ENCODE measurements at regions of chr19 and their contacts with region 1.

Region 1: DNA sequence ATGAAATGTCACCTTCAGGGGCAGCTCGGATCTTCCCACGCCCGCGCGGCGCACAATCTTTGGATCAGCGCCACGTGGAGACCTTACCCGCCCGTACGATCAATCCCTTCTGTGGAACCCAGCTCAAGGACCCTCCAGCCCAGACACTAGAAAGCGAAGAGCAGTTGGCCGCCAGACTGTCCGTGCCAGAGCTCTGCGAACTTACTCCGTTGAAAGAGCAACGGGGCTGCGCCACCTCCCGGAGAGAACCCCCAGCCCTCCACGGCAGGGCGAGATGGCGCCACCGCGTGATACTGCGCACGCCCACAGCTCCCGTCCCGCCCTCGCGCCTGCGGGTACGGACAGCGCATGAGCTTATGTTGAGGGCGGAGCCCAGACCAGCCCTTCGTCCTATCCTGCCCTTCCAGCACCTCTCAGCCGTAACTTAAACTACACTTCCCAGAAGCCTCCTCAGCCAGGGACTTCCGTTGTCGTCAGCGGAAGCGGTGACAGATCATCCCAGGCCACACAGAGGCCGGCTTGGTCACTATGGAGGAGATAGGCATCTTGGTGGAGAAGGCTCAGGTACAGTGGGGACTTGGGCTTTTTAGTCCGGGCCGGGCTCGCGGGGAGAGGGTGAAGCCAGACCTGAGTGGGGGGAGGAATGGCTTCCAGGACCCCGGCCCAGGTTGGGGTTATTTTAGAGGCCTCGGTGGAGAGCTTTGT is at the start of gene PSMC4:
- DNase-seq: peak; percentile 100
- ATAC-seq: peak; percentile 98
- H3K4me3 ChIP-seq: peak within 1 kb of the TSS; percentile 35 to 50
- H3K27ac ChIP-seq: peak within 1 kb of the TSS; percentile 82
- H3K4me1 ChIP-seq: peaks cover 17% of the 10 kb centered on the region
- H3K27me3 ChIP-seq: no peaks in the 10 kb centered on the region
- CTCF ChIP-seq: no peak
- total RNA-seq, gene PSMC4: 2,386 TPM

Region 2: DNA sequence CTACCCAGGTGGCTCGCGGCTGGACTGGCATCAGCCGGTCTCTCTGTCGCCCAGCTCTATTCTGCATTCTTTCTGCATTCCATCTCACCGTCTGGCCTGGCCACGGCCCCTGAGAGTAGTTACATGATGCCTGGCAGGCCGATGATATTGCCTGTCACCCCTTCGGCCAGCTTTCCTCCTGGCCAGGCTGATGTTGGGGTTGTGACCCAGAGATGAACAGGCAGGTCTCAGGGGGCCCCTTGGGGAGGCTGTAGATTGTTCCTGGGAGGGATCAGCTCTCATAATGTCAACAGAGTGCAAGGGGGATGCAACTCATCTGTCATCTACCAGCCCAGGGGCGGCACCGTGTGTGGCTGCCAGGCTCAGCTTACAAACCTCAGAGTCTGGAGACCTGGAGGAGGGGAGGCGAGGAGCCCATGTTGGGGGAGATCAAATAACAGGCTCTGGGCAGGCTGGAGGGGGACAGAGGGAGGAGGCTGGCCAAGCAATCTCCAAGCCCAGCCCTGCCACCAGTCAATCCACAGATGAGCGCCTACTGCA is 981.7 kb before region 1 on chr19:
- CTCF ChIA-PET with region 1: no interaction called
- POLR2A ChIA-PET with region 1: interaction called, 15 read pairs
- in situ Hi-C with region 1: no loop called
- intact Hi-C with region 1: no loop called
- DNase-seq: no peak
- ATAC-seq: peak; percentile 80
- H3K4me3 ChIP-seq: no peak overlapping the region
- H3K27ac ChIP-seq: peak overlapping the region; percentile 2
- H3K4me1 ChIP-seq: peaks cover 14% of the 10 kb centered on the region
- H3K27me3 ChIP-seq: no peaks in the 10 kb centered on the region
- CTCF ChIP-seq: no peak

Region 3: DNA sequence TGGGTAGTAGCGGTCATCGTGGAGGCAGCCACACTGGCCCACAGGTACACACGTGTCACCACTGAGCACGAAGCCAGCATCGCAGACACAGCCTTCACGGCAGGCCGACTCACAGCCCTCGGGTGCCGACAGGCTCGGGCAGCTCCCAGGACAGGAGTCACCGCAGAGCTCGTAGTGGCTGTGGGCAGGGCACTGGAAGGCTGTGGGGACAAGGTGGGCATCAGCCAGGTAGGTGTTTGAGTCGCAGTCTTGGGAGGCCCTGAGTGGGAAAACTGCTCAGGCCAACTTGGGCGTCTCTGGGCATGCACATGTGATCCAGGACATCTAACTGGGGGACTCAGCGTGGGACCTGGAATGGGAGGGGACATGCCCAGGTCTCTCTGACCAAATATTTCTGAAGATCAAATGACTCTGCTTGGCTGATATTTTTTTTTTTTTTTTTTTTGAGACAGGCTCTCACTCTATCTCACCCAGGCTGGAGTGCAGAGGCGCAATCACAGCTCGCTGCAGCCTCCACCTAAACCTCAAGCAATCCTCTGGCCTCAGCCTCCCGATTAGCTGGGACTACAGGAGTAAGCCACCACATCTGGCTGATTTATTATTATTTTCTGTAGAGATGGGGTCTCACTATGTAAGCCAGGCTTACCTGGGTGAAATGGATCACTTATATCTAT is 80.8 kb before region 1 on chr19:
- CTCF ChIA-PET with region 1: interaction called, 37 read pairs
- POLR2A ChIA-PET with region 1: interaction called, 8 read pairs
- in situ Hi-C with region 1: loop called (anchors 5 kb)
- intact Hi-C with region 1: no loop called
- DNase-seq: no peak
- ATAC-seq: peak; percentile 0; the same call in 1 of the 2 replicates
- H3K4me3 ChIP-seq: no peak overlapping the region
- H3K27ac ChIP-seq: no peak overlapping the region
- H3K4me1 ChIP-seq: no peaks in the 10 kb centered on the region
- H3K27me3 ChIP-seq: no peaks in the 10 kb centered on the region
- CTCF ChIP-seq: no peak

Region 4: GRCh38 chr19:39934584-39935363 is 36.1 kb before region 1 on chr19 and contains the start of gene FCGBP:
- CTCF ChIA-PET with region 1: interaction called, 19 read pairs
- POLR2A ChIA-PET with region 1: interaction called, 14 read pairs
- in situ Hi-C with region 1: loop called (anchors 5 kb)
- intact Hi-C with region 1: no loop called
- DNase-seq: no peak
- ATAC-seq: peak; percentile 31
- H3K4me3 ChIP-seq: no peak within 1 kb of the TSS
- H3K27ac ChIP-seq: no peak within 1 kb of the TSS
- H3K4me1 ChIP-seq: no peaks in the 10 kb centered on the region
- H3K27me3 ChIP-seq: peaks cover 30% of the 10 kb centered on the region
- CTCF ChIP-seq: no peak
- total RNA-seq, gene FCGBP: 6.4 TPM

Region 5: GRCh38 chr19:40006273-40006691 is 35.5 kb after region 1 on chr19:
- CTCF ChIA-PET with region 1: interaction called, 5 read pairs
- POLR2A ChIA-PET with region 1: interaction called, 16 read pairs
- in situ Hi-C with region 1: no loop called
- intact Hi-C with region 1: no loop called
- DNase-seq: peak; percentile 100
- ATAC-seq: peak; percentile 91
- H3K4me3 ChIP-seq: no peak overlapping the region
- H3K27ac ChIP-seq: no peak overlapping the region
- H3K4me1 ChIP-seq: peaks cover 8% of the 10 kb centered on the region; the same call in 1 of the 2 replicates
- H3K27me3 ChIP-seq: no peaks in the 10 kb centered on the region
- CTCF ChIP-seq: no peak

Region 6: DNA sequence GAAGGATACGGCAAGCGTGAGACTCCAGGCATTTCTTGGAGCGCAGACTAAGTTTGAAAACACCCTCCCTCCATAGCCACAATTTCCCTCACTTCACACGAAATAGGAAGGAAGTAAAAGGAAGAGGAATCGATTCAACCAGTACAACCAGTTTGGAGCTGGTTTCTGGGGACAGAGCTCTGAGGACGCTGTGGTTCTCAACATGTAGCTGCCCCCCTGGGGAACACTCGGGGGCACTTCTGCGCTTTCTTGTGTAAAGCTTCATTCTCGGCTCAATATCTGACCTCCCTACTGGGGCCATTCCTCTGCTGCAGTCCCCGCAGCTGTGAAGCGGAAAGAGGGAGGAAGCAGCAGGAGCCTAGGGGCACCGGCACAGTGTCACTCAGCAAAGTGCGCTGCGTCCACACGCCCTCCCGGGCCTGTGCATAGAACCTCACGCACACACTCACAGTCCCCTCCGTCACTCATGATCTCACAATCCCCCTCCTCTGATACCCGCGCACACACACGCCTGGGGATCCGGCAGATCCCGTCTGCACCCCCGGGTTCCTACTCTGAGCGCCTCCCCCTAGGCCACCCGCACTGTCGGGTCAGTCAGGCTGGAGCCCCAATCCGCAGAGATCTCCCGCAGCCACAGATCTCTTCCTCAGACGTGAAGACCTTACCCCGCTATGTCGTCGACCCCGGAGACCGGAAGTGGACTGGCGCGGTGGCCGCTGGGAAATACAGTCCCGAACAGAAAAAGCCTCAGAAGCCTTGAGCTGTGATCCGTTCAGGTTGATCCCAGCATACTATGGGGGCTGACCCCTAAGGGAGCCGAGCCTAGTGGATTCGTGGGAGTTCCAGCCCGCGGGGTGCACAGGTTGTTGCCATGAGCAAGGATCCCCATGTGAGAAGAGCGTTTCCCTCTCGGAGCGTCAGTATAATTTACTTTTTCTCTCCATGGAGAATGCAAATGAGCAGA is 119.7 kb after region 1 on chr19 and contains the start of gene ZNF780A:
- CTCF ChIA-PET with region 1: interaction called, 24 read pairs
- POLR2A ChIA-PET with region 1: interaction called, 35 read pairs
- in situ Hi-C with region 1: no loop called
- intact Hi-C with region 1: no loop called
- DNase-seq: peak; percentile 100
- ATAC-seq: peak; percentile 99
- H3K4me3 ChIP-seq: peak within 1 kb of the TSS; percentile 36 to 48
- H3K27ac ChIP-seq: peak within 1 kb of the TSS; percentile 83
- H3K4me1 ChIP-seq: peaks cover 15% of the 10 kb centered on the region
- H3K27me3 ChIP-seq: no peaks in the 10 kb centered on the region; the same call in 1 of the 2 replicates
- CTCF ChIP-seq: no peak
- total RNA-seq, gene ZNF780A: 251 TPM

Region 7: DNA sequence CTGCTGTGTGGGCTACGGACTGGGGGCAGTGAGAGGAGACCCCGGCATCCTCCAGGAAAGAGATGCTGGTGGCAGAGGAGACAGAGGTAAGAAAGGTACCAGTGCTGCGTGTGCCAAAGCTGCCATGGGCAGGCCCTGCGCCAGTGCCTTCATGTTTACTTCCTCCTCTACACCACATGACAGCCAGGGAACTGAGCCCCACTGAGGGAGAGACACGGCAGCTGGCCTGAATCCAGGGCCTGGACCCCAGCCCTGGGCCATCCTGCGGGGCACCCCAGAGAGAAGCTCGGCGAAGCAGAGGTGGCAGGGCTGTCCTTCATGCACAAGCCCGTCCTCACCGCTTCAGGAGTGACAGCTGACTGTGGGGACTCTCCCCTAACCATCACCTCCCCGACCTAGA is 278.4 kb after region 1 on chr19:
- CTCF ChIA-PET with region 1: no interaction called
- POLR2A ChIA-PET with region 1: no interaction called
- in situ Hi-C with region 1: no loop called
- intact Hi-C with region 1: no loop called
- DNase-seq: no peak
- ATAC-seq: peak; percentile 0; the same call in 1 of the 2 replicates
- H3K4me3 ChIP-seq: no peak overlapping the region
- H3K27ac ChIP-seq: no peak overlapping the region
- H3K4me1 ChIP-seq: 0 out of 2 replicates have a peak, but pooled peaks cover 5% of the 10 kb centered on the region
- H3K27me3 ChIP-seq: no peaks in the 10 kb centered on the region
- CTCF ChIP-seq: no peak

Region 8: DNA sequence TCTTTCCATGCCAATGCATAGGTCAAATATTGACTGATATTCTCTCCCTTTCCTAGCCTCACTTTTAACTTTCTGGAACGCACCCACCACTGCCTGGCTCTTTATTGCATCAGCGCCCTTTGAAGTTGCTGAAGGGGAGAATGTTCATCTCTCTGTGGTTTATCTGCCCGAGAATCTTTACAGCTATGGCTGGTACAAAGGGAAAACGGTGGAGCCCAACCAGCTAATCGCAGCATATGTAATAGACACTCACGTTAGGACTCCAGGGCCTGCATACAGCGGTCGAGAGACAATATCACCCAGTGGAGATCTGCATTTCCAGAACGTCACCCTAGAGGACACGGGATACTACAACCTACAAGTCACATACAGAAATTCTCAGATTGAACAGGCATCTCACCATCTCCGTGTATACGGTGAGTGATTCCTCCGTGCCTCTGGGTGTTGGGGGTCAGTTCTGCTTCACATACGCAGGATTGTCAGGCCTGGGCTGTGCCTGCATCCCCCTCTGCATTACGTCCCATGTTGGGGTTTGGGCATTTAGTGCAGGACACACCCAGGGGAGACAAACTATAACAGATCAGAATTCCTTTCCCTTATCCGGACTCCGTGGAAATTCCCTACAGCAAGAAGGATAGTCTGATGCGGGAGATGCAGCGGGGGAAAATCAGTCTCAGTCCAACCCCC is 1606.5 kb after region 1 on chr19:
- CTCF ChIA-PET with region 1: no interaction called
- POLR2A ChIA-PET with region 1: no interaction called
- in situ Hi-C with region 1: no loop called
- intact Hi-C with region 1: no loop called
- DNase-seq: no peak
- ATAC-seq: no peak
- H3K4me3 ChIP-seq: no peak overlapping the region
- H3K27ac ChIP-seq: no peak overlapping the region
- H3K4me1 ChIP-seq: no peaks in the 10 kb centered on the region
- H3K27me3 ChIP-seq: no peaks in the 10 kb centered on the region; the same call in 1 of the 2 replicates
- CTCF ChIP-seq: no peak

Measured in Panc1 (cell line).